Activated naive CD4-positive, alpha-beta T cell treated with anti-CD3 and anti-CD28 coated beads for 36 hours (primary cell): ENCODE measurements at regions of chr12 and their contacts with region 1.

Region 1: DNA sequence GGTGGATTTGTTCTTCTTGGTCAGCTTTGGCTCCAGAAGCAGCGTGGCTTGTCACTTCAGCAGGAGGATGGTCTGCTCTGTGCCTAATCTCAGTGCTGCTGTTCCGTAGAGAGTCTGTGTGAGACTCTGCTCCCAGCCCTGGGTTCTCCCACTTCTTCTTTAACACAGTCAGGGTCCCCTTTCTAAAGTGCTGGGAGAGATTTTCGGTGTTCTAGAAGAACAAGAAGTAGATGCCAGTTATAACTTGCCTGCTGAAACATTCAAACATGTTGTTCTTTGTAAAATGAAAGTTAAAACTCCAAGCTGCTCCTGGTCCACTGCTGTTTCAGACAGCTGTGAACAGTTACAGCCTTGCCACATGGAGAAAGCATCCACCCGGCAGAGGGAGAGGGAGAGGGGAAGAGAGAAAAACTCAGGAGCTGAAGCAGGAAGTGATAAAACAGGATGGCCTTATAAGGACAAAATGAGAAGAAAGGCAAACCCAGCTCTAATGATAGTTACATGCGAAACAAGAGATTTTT is 55.2 kb upstream of the CERS5 start:
- DNase-seq: peak; percentile 32
- H3K4me3 Mint-ChIP-seq: no peak overlapping the region
- H3K27ac Mint-ChIP-seq: no peak overlapping the region
- H3K4me1 Mint-ChIP-seq: peaks cover 36% of the 10 kb centered on the region
- H3K27me3 Mint-ChIP-seq: no peaks in the 10 kb centered on the region

Region 2: GRCh38 chr12:50167041-50167828 is 55.1 kb before region 1 on chr12 and contains the start of gene CERS5:
- CTCF ChIA-PET with region 1: interaction called, 3 read pairs
- intact Hi-C with region 1: loop called (anchors 1 kb)
- DNase-seq: peak; percentile 98
- H3K4me3 Mint-ChIP-seq: peak within 1 kb of the TSS; percentile 92
- H3K27ac Mint-ChIP-seq: peak within 1 kb of the TSS; percentile 91
- H3K4me1 Mint-ChIP-seq: peaks cover 33% of the 10 kb centered on the region
- H3K27me3 Mint-ChIP-seq: no peaks in the 10 kb centered on the region
- total RNA-seq, gene CERS5: 32.6 to 33.6 TPM

Region 3: GRCh38 chr12:50246873-50247612 is 24.7 kb after region 1 on chr12:
- CTCF ChIA-PET with region 1: interaction called, 4 read pairs
- intact Hi-C with region 1: loop called (anchors 1 kb)
- DNase-seq: peak; percentile 56
- H3K4me3 Mint-ChIP-seq: no peak overlapping the region
- H3K27ac Mint-ChIP-seq: peak overlapping the region; percentile 68
- H3K4me1 Mint-ChIP-seq: peaks cover 11% of the 10 kb centered on the region
- H3K27me3 Mint-ChIP-seq: no peaks in the 10 kb centered on the region

Region 4: GRCh38 chr12:50400598-50401364 is 178.4 kb after region 1 on chr12 and contains the start of gene LARP4:
- CTCF ChIA-PET with region 1: no interaction called
- intact Hi-C with region 1: loop called (anchors 2 kb)
- DNase-seq: peak; percentile 94
- H3K4me3 Mint-ChIP-seq: peak within 1 kb of the TSS; percentile 99
- H3K27ac Mint-ChIP-seq: peak within 1 kb of the TSS; percentile 87
- H3K4me1 Mint-ChIP-seq: peaks cover 19% of the 10 kb centered on the region
- H3K27me3 Mint-ChIP-seq: peaks cover 2% of the 10 kb centered on the region
- total RNA-seq, gene LARP4: 44.7 to 44.9 TPM

Region 5: DNA sequence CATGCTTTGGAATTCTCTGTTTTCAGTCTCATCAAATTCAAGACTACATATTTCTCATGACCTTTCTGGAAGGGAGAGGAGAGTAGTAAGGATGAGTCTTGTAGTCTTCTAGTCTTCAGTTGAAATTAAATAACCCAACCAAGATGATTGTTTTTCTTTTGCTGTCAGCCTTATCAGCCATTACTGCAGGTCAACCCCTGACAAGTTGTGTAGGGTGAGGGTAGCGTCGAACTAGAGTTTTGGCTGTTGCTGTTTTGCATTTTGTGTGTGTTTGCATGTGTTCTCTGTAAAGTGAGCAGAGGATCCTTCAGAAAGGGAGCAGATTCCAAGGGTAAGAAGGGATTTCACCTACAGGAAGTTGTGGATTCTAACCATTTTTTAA is 310.9 kb after region 1 on chr12:
- CTCF ChIA-PET with region 1: no interaction called
- intact Hi-C with region 1: loop called (anchors 5 kb)
- DNase-seq: no peak
- H3K4me3 Mint-ChIP-seq: no peak overlapping the region
- H3K27ac Mint-ChIP-seq: no peak overlapping the region
- H3K4me1 Mint-ChIP-seq: peaks cover 39% of the 10 kb centered on the region
- H3K27me3 Mint-ChIP-seq: no peaks in the 10 kb centered on the region